HepG2 (cell line): ENCODE measurements at regions of chr10 and their contacts with region 1.

Region 1: DNA sequence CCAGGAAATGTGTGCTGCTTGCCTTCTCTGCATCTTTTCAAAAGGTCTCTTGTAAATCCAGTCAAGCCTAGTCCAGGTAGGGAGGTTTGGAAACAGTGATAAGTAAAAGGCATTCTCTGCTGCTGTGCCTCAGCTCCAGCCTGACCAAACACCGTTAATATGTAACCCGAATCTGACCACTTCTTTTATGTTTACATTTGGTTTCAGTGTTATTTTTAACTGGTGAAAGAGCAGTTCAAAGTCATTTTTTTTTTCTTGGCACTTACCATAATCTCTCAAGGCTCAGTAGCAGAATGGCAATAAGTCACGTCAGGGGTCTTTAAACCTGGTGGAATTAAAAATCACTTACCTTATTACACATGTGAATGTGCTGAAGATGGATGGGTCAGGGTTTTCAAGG is 216.8 kb downstream of the PTEN start:
- DNase-seq: peak; percentile 69
- ATAC-seq: peak; percentile 99
- H3K4me3 ChIP-seq: 0 out of 6 replicates have a peak overlapping the region, but pooled peaks of 1 of the 3 experiments have one; percentile 25
- H3K27ac ChIP-seq: no peak overlapping the region
- H3K4me1 ChIP-seq: peaks cover 42% of the 10 kb centered on the region
- H3K27me3 ChIP-seq: no peaks in the 10 kb centered on the region; a peak in 2 of 5 replicates
- CTCF ChIP-seq: no peak
- EP300 ChIP-seq: peak in 1 of 2 experiments; percentile 54; a peak in 1 of 4 replicates
- POLR2A ChIP-seq: no peak
- RAD21 ChIP-seq: no peak

Region 2: GRCh38 chr10:88062798-88063472 is 17.3 kb before region 1 on chr10:
- CTCF ChIA-PET with region 1: no interaction called
- POLR2A ChIA-PET with region 1: no interaction called
- in situ Hi-C with region 1: no loop called
- intact Hi-C with region 1: loop called (anchors 2 kb)
- DNase-seq: peak; percentile 56
- ATAC-seq: peak; percentile 94
- H3K4me3 ChIP-seq: peak overlapping the region in 1 of 3 experiments; percentile 2; a peak in 1 of 6 replicates
- H3K27ac ChIP-seq: peak overlapping the region; percentile 7
- H3K4me1 ChIP-seq: peaks cover 21% of the 10 kb centered on the region
- H3K27me3 ChIP-seq: no peaks in the 10 kb centered on the region
- CTCF ChIP-seq: no peak
- EP300 ChIP-seq: 0 out of 4 replicates have a peak, but pooled peaks of 1 of the 2 experiments have one; percentile 7
- POLR2A ChIP-seq: no peak
- RAD21 ChIP-seq: no peak

Region 3: DNA sequence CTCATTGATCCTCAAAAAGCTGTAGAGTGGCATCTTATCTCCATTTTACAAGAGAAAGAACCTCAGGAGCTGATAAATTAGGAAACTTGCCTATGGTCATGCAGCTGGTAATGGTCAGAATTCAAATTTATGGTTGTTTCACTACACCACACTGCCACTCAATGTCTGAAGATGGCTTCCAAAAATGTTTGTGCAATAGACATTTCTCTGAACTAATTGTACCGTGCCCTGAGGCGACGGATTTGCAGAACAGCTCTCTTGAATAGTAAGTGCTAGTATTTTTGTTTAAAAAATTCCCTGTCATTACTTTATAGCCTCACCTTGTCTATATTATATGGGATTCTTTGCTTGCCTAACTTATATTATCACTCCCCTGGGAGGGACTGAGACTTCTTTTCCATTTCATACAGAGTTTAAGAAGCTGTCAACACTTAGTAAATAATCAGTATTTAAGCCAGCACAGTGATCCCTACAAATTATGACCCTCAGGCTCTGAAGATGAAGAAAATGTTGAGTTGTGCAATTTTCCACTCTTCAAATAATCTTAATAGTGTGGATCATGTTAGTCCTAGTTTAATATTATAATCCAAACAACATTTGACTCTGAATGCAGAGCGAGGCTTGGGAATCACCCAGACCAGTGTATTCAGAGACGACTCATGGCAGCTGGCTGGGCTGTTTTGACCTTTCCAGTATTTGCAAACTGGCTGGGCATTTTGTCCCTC is 129.8 kb after region 1 on chr10:
- CTCF ChIA-PET with region 1: no interaction called
- POLR2A ChIA-PET with region 1: no interaction called
- in situ Hi-C with region 1: no loop called
- intact Hi-C with region 1: no loop called
- DNase-seq: no peak
- ATAC-seq: no peak
- H3K4me3 ChIP-seq: no peak overlapping the region
- H3K27ac ChIP-seq: no peak overlapping the region
- H3K4me1 ChIP-seq: no peaks in the 10 kb centered on the region
- H3K27me3 ChIP-seq: no peaks in the 10 kb centered on the region
- CTCF ChIP-seq: no peak
- EP300 ChIP-seq: no peak
- POLR2A ChIP-seq: no peak
- RAD21 ChIP-seq: no peak